ENCODE measurements at regions of chr20 and their contacts with region 1.

Region 1: GRCh38 chr20:50491926-50492634 is 18.1 kb upstream of the PTPN1 start:
- DNase-seq: no peak
- H3K4me3 Mint-ChIP-seq: no peak overlapping the region
- H3K27ac Mint-ChIP-seq: peak overlapping the region; percentile 88
- H3K4me1 Mint-ChIP-seq: peaks cover 38% of the 10 kb centered on the region
- H3K27me3 Mint-ChIP-seq: no peaks in the 10 kb centered on the region

Region 2: DNA sequence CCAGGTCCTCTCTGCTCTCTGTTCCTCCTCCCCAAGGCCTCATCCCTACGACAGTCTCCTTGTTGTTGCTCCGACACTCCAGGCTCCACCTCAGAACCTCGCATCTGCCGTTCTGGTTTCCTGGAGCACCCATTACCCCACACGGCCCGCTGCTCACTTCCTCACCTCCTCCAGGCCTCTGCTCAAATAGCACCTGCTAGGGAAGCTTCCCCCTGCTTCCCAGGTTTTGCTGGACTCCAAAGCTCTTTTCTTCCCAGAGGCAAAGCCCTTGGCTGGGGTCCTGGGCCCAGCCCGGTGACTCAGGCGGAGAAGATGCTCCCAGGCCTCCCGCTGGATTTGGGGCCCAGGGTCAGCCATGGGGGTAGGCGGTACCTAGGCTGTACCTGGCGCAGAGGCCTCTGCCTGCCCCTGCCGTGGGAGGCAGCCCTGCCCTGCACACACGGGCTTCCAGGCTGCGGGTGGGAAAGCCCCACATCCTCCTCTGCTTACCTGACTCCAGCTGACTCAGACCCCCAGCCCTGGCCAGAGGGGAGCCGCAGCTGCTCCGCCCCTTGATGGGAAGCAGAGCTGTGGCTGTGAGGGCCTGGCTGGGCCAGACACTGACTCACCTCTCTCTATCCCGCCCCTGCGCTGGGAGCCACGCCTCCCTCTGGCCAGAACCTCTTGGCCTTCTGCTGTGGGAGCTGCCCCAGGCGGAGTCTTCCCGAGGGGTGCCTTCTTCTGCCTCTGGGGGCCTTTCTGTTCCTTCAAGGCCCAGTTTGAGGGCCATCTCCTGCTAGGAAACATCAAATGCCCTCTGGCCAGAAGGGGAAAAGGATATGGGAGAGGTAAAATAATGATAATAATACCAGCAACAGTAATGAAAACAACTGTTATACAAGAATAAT is 170.9 kb before region 1 on chr20:
- CTCF ChIA-PET with region 1: no interaction called
- POLR2A ChIA-PET with region 1: no interaction called
- intact Hi-C with region 1: no loop called
- DNase-seq: peak; percentile 71
- H3K4me3 Mint-ChIP-seq: no peak overlapping the region
- H3K27ac Mint-ChIP-seq: no peak overlapping the region
- H3K4me1 Mint-ChIP-seq: peaks cover 11% of the 10 kb centered on the region
- H3K27me3 Mint-ChIP-seq: peaks cover 12% of the 10 kb centered on the region

Region 3: DNA sequence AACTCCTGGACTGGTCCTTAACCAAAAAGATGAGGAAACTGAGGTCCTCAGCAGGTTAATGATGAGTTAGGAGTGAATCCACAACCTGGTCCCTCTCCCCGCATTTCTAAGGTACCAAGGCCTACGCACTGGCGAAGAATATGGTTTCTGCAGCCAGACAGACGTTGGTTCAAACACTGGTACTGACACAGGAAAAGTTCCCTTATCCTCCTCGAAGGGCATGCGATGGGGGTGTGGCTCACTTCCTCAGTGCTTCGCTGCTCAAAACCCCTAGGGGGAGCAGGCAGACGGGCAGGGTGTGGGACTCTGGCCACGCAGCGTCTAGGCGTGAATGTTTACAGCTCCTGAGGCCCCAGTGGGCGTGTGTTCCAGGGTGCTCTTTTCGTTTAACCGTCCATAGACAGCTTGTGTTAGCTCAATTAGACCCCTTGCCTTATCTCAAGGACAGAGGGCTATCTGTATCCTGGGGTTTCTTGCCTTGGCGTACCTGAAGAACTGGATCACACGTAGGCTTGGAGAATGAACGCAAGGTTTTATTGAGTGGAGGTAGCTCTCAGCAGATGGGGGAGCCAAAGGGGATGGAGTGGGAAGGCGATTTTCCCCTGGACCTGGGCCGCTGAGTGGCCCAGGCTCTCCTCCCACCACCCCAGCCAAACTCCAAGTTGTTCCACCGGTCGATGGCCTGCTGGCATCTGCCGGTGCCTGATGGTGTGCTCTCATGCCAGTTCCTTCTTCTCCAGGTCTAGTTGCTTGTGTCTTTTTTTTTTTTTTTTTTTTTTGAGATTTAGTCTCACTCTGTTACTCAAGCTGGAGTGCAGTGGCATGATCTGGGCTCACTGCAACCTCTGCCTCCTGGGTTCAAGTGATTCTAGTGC is 13.7 kb before region 1 on chr20:
- CTCF ChIA-PET with region 1: interaction called, 11 read pairs
- POLR2A ChIA-PET with region 1: interaction called, 5 read pairs
- intact Hi-C with region 1: loop called (anchors 1 kb)
- DNase-seq: peak; percentile 89
- H3K4me3 Mint-ChIP-seq: no peak overlapping the region
- H3K27ac Mint-ChIP-seq: no peak overlapping the region
- H3K4me1 Mint-ChIP-seq: peaks cover 37% of the 10 kb centered on the region
- H3K27me3 Mint-ChIP-seq: no peaks in the 10 kb centered on the region